ENCODE measurements at regions of chr13 and their contacts with region 1.

Region 1: GRCh38 chr13:44465318-44465717 is 91.7 kb downstream of the SERP2 start:
- DNase-seq: no peak
- ATAC-seq: no peak
- H3K4me3 ChIP-seq: no peak overlapping the region
- H3K27ac ChIP-seq: no peak overlapping the region
- H3K4me1 ChIP-seq: no peaks in the 10 kb centered on the region
- H3K27me3 ChIP-seq: no peaks in the 10 kb centered on the region
- CTCF ChIP-seq: no peak
- POLR2A ChIP-seq: no peak

Region 2: GRCh38 chr13:43905435-43906031 is 559.8 kb before region 1 on chr13:
- intact Hi-C with region 1: loop called (anchors 10 kb)
- DNase-seq: no peak
- ATAC-seq: peak; percentile 86 to 93 (median 90)
- H3K4me3 ChIP-seq: no peak overlapping the region
- H3K27ac ChIP-seq: no peak overlapping the region
- H3K4me1 ChIP-seq: no peaks in the 10 kb centered on the region
- H3K27me3 ChIP-seq: no peaks in the 10 kb centered on the region
- CTCF ChIP-seq: peak; percentile 75 to 90 (median 84)
- POLR2A ChIP-seq: no peak

Region 3: GRCh38 chr13:43915451-43915850 is 549.9 kb before region 1 on chr13:
- intact Hi-C with region 1: loop called in 1 of 2 experiments (anchors 10 kb)
- DNase-seq: no peak
- ATAC-seq: no peak
- H3K4me3 ChIP-seq: no peak overlapping the region
- H3K27ac ChIP-seq: no peak overlapping the region
- H3K4me1 ChIP-seq: no peaks in the 10 kb centered on the region
- H3K27me3 ChIP-seq: no peaks in the 10 kb centered on the region
- CTCF ChIP-seq: no peak
- POLR2A ChIP-seq: no peak